CD4-positive, alpha-beta T cell (primary cell): ENCODE measurements at regions of chr10 and their contacts with region 1.

Region 1: DNA sequence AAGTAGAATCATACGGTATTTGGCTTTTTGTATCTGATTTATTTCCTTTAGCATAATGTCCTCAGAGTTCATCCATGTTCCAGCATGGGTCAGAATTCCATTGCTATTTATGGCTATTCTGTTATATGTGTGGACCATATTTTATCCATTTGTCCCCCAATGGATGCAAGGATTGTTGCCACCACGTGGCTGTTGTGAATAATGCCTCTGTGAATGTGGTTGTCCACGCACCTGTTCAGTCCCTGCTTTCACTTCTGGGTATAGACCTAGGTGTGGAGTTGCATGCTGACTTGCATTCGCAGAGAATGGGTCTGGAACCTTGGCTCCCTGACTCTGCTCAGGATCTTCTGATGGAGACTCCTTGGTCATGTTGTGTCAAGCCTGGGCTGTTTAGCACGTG is 199.9 kb downstream of the CAMK1D start:
- DNase-seq: no peak
- ATAC-seq: no peak
- H3K4me3 ChIP-seq: no peak overlapping the region
- H3K4me3 Mint-ChIP-seq: no peak overlapping the region
- H3K27ac ChIP-seq: no peak overlapping the region
- H3K27ac Mint-ChIP-seq: no peak overlapping the region
- H3K4me1 ChIP-seq: peaks cover 22% of the 10 kb centered on the region
- H3K4me1 Mint-ChIP-seq: peaks cover 44% of the 10 kb centered on the region
- H3K27me3 ChIP-seq: no peaks in the 10 kb centered on the region
- H3K27me3 Mint-ChIP-seq: no peaks in the 10 kb centered on the region
- CTCF ChIP-seq: no peak

Region 2: GRCh38 chr10:12499076-12499986 is 50.0 kb before region 1 on chr10:
- CTCF ChIA-PET with region 1: no interaction called
- POLR2A ChIA-PET with region 1: no interaction called
- intact Hi-C with region 1: no loop called
- DNase-seq: no peak
- ATAC-seq: no peak
- H3K4me3 ChIP-seq: no peak overlapping the region
- H3K4me3 Mint-ChIP-seq: no peak overlapping the region
- H3K27ac ChIP-seq: no peak overlapping the region
- H3K27ac Mint-ChIP-seq: peak overlapping the region; percentile 70
- H3K4me1 ChIP-seq: peaks cover 18% of the 10 kb centered on the region
- H3K4me1 Mint-ChIP-seq: peaks cover 59% of the 10 kb centered on the region
- H3K27me3 ChIP-seq: no peaks in the 10 kb centered on the region
- H3K27me3 Mint-ChIP-seq: no peaks in the 10 kb centered on the region
- CTCF ChIP-seq: no peak

Region 3: DNA sequence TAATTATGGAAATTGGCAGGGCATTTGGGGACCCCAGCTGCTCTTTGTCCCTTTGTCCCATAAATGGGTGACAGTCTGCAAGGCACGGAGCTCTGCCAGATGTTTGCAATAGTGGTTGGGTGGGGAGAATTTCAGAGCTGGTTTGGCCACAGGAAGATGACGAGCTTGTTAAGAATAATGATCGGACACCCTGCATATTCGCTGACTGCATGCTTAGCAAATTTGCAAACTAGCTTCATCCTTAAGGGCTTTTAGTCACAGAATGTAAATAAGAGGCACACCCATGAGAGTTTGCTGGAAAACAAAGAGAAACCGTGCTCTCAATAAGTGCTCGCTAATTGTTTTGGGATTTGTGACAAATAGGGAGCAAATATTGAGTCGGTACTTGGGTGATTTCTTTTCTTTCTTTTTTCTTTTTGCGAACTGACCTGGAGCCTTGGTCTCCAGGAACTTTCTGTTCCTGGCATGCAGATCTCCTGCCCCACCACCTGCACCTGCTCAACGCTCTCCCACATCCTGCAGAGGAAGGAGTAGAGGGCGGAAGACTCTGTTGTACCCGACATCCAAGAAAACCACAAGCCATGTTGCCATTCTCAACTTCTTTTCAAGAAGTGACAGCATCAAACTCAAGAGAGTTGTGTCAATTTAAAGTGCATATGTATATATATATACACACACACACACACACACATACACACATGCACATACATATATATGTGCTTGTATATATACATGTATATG is 39.0 kb after region 1 on chr10:
- CTCF ChIA-PET with region 1: no interaction called
- POLR2A ChIA-PET with region 1: interaction called, 7 read pairs
- intact Hi-C with region 1: loop called in 1 of 2 experiments (anchors 5 kb)
- DNase-seq: peak in 7 of 14 experiments; percentile 17 to 72 (median 51)
- ATAC-seq: peak; percentile 84
- H3K4me3 ChIP-seq: peak overlapping the region; percentile 43
- H3K4me3 Mint-ChIP-seq: peak overlapping the region; percentile 76
- H3K27ac ChIP-seq: no peak overlapping the region
- H3K27ac Mint-ChIP-seq: peak overlapping the region; percentile 96
- H3K4me1 ChIP-seq: peaks cover 36% of the 10 kb centered on the region
- H3K4me1 Mint-ChIP-seq: peaks cover 86% of the 10 kb centered on the region
- H3K27me3 ChIP-seq: no peaks in the 10 kb centered on the region
- H3K27me3 Mint-ChIP-seq: no peaks in the 10 kb centered on the region
- CTCF ChIP-seq: no peak